Ascending aorta (tissue), 2 donors: ENCODE measurements at regions of chr2 and their contacts with region 1.

Region 1: GRCh38 chr2:182845794-182846417 is 20.5 kb downstream of the FRZB start:
- DNase-seq: no peak
- H3K4me3 ChIP-seq: no peak overlapping the region
- H3K27ac ChIP-seq: no peak overlapping the region
- H3K4me1 ChIP-seq: peaks cover 0 to 2% of the 10 kb centered on the region in 2 donors
- H3K27me3 ChIP-seq: no peaks in the 10 kb centered on the region
- CTCF ChIP-seq: no peak

Region 2: GRCh38 chr2:182870227-182870626 is 24.3 kb after region 1 on chr2:
- intact Hi-C with region 1: no loop called
- DNase-seq: no peak
- H3K4me3 ChIP-seq: no peak overlapping the region
- H3K27ac ChIP-seq: no peak overlapping the region
- H3K4me1 ChIP-seq: peaks cover 0 to 3% of the 10 kb centered on the region in 2 donors
- H3K27me3 ChIP-seq: no peaks in the 10 kb centered on the region
- CTCF ChIP-seq: no peak

Region 3: GRCh38 chr2:182897137-182897536 is 51.2 kb after region 1 on chr2:
- intact Hi-C with region 1: loop called (anchors 10 kb)
- DNase-seq: no peak
- H3K4me3 ChIP-seq: no peak overlapping the region
- H3K27ac ChIP-seq: peak overlapping the region; percentile 83 to 85
- H3K4me1 ChIP-seq: peaks cover 6 to 26% of the 10 kb centered on the region in 2 donors
- H3K27me3 ChIP-seq: no peaks in the 10 kb centered on the region
- CTCF ChIP-seq: no peak